Ovary (tissue), 10 donors: ENCODE measurements at regions of chr1 and their contacts with region 1.

Region 1: DNA sequence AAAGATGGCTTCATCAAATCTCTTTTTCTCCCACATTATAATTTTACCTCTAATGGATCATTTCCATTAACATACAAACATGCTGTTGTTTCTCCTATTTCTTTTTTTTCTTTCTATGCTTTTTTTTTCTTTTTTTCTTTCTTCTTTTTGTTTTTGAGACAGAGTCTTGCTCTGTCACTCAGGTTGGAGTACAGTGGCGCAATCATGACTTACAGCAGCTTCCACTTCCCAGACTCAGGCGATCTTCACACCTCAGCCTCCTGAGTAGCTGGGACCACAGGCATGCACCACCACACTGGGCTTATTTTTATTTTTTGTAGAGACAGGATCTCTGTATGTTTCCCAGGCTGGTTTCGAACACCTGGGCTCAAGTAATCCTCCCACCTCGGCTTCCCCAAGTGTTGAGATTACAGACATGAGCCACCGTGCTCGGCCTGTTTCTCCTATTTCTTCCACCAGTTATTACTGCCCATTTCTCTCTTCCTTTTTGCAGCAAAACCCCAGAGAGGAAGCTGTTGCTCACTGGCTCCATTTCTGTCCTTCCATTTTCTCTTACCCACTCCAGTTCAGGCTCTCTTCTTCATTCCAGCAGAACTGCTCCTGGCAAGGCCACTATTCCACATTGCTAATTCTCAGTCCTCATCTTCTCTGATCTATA is 32.1 kb upstream of the OPRD1 start:
- DNase-seq: no peak
- H3K4me3 ChIP-seq: no peak overlapping the region
- H3K27ac ChIP-seq: no peak overlapping the region
- H3K4me1 ChIP-seq: peaks cover 7% of the 10 kb centered on the region
- H3K27me3 ChIP-seq: no peaks in the 10 kb centered on the region
- CTCF ChIP-seq: no peak
- EP300 ChIP-seq: no peak
- POLR2A ChIP-seq: no peak

Region 2: DNA sequence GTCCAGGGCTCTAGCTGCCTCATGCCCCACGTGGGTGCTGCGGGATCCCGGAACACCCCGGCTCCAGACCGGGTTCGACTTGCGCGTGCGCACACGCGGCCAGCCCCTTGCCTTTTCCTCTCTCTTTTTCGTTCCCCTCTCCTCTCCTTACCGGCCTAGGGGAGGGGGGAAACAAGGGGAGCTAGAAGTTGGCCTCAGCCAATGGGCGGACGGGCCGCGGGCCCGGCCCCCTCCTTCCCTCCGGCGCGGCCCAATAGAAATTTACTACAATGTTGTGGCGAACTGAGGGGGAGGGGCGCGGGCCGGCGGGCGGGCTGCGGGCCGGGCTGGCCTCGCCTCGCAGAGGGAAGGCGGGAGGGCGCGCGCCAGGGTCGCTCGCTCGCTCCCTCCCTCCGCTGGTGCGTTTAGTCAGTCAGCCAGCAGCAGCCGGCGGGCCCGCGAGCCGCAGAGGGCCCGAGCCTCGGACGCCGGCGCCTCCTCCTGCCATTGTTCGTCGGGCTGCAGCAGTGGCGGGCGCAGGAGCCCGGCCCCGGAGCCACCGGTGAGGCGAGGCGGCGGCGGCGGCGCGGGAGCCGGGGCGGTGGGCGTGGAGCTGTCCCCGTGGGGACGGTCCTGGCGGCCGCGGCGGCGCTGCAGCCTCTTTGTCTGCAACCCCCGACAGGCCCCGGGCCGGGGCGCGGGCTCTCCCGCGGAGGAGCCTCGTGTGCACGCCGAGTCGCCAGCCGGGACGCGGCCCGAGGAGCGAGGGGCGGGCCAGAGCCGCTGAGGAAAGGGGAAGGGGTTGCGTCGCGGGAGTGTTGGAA is 134.5 kb after region 1 on chr1 and contains the start of gene EPB41:
- intact Hi-C with region 1: no loop called
- DNase-seq: peak; percentile 92 to 95 (median 95)
- H3K4me3 ChIP-seq: peak within 1 kb of the TSS; percentile 67
- H3K27ac ChIP-seq: peak within 1 kb of the TSS; percentile 75 to 82
- H3K4me1 ChIP-seq: peaks cover 2% of the 10 kb centered on the region
- H3K27me3 ChIP-seq: no peaks in the 10 kb centered on the region
- CTCF ChIP-seq: no peak
- EP300 ChIP-seq: no peak
- POLR2A ChIP-seq: peak; percentile 48
- total RNA-seq, gene EPB41: 23.0 to 56.4 (median 31.8) TPM

Region 3: GRCh38 chr1:29202584-29203340 is 422.9 kb after region 1 on chr1:
- intact Hi-C with region 1: loop called in 1 of 4 experiments (anchors 10 kb)
- DNase-seq: peak; percentile 96 to 98 (median 97)
- H3K4me3 ChIP-seq: no peak overlapping the region
- H3K27ac ChIP-seq: peak overlapping the region in 1 of 2 donors; percentile 80
- H3K4me1 ChIP-seq: no peaks in the 10 kb centered on the region
- H3K27me3 ChIP-seq: no peaks in the 10 kb centered on the region
- CTCF ChIP-seq: peak; percentile 92 to 97 (median 95)
- EP300 ChIP-seq: no peak
- POLR2A ChIP-seq: no peak